B cell (primary cell): ENCODE measurements at regions of chr1 and their contacts with region 1.

Region 1: GRCh38 chr1:89632657-89633247 is at the start of gene LRRC8C:
- DNase-seq: peak; percentile 93
- ATAC-seq: peak; percentile 88
- H3K4me3 ChIP-seq: peak within 1 kb of the TSS; percentile 70 to 95 (median 88)
- H3K4me3 Mint-ChIP-seq: peak within 1 kb of the TSS; percentile 97
- H3K27ac ChIP-seq: peak within 1 kb of the TSS; percentile 83 to 88
- H3K27ac Mint-ChIP-seq: peak within 1 kb of the TSS; percentile 97
- H3K4me1 ChIP-seq: peaks cover 15 to 23% of the 10 kb centered on the region in 2 donors
- H3K4me1 Mint-ChIP-seq: peaks cover 45% of the 10 kb centered on the region
- H3K27me3 ChIP-seq: no peaks in the 10 kb centered on the region
- H3K27me3 Mint-ChIP-seq: no peaks in the 10 kb centered on the region
- CTCF ChIP-seq: peak; percentile 64
- total RNA-seq, gene LRRC8C: 6.7 and 6.8 TPM in 2 replicates

Region 2: GRCh38 chr1:89670163-89670562 is 37.4 kb after region 1 on chr1:
- CTCF ChIA-PET with region 1: interaction called, 7 read pairs
- POLR2A ChIA-PET with region 1: interaction called, 3 read pairs
- intact Hi-C with region 1: loop called (anchors 1 kb)
- DNase-seq: peak; percentile 90
- ATAC-seq: peak; percentile 98
- H3K4me3 ChIP-seq: no peak overlapping the region
- H3K4me3 Mint-ChIP-seq: peak overlapping the region; percentile 61
- H3K27ac ChIP-seq: peak overlapping the region; percentile 19 to 57
- H3K27ac Mint-ChIP-seq: peak overlapping the region; percentile 59
- H3K4me1 ChIP-seq: peaks cover 21 to 22% of the 10 kb centered on the region in 2 donors
- H3K4me1 Mint-ChIP-seq: peaks cover 44% of the 10 kb centered on the region
- H3K27me3 ChIP-seq: no peaks in the 10 kb centered on the region
- H3K27me3 Mint-ChIP-seq: no peaks in the 10 kb centered on the region
- CTCF ChIP-seq: no peak

Region 3: GRCh38 chr1:89719502-89720306 is 87.0 kb after region 1 on chr1:
- CTCF ChIA-PET with region 1: interaction called, 6 read pairs
- POLR2A ChIA-PET with region 1: interaction called, 4 read pairs
- intact Hi-C with region 1: loop called (anchors 2 kb)
- DNase-seq: peak; percentile 62
- ATAC-seq: peak; percentile 88
- H3K4me3 ChIP-seq: peak overlapping the region in 2 of 5 experiments; percentile 19 to 30
- H3K4me3 Mint-ChIP-seq: peak overlapping the region; percentile 64
- H3K27ac ChIP-seq: peak overlapping the region; percentile 11 to 45
- H3K27ac Mint-ChIP-seq: peak overlapping the region; percentile 42
- H3K4me1 ChIP-seq: peaks cover 38 to 46% of the 10 kb centered on the region in 2 donors
- H3K4me1 Mint-ChIP-seq: peaks cover 53% of the 10 kb centered on the region
- H3K27me3 ChIP-seq: no peaks in the 10 kb centered on the region
- H3K27me3 Mint-ChIP-seq: no peaks in the 10 kb centered on the region
- CTCF ChIP-seq: peak; percentile 18

Region 4: DNA sequence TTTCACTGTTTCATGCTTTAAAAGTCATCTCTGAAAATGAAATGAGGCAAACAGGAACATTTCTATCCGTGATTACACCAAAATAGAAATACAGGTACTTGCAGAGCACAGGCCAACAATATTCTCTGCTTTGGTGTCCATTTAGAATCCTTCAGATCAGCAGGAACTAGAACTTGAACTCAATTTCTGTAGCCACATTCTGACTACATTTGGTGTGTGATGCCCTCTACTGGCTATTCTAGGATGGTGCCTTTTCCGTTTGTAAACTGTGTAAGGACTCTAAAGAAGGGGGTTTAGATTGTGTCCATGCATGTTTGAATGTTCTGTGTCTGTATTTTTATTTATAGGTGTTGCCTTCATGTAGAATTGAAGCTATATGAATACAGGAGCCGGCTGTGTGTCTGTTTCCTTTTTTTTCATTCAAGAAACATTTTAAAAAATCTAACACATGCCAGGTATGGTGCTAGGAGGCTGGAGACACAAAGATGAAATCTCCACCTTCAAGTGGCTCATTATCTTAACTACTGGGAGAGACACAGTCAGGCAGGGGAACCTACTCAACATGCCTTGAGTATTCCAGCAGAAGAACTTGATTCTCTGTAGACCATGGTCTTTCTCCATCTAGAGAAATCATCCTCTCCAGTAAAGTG is 354.5 kb after region 1 on chr1:
- CTCF ChIA-PET with region 1: no interaction called
- POLR2A ChIA-PET with region 1: no interaction called
- intact Hi-C with region 1: loop called (anchors 2 kb)
- DNase-seq: peak; percentile 76
- ATAC-seq: peak; percentile 93
- H3K4me3 ChIP-seq: no peak overlapping the region
- H3K4me3 Mint-ChIP-seq: no peak overlapping the region
- H3K27ac ChIP-seq: no peak overlapping the region
- H3K27ac Mint-ChIP-seq: no peak overlapping the region
- H3K4me1 ChIP-seq: no peaks in the 10 kb centered on the region
- H3K4me1 Mint-ChIP-seq: no peaks in the 10 kb centered on the region
- H3K27me3 ChIP-seq: no peaks in the 10 kb centered on the region
- H3K27me3 Mint-ChIP-seq: no peaks in the 10 kb centered on the region
- CTCF ChIP-seq: peak; percentile 94